ENCODE measurements at regions of chr11 and their contacts with region 1.

Region 1: GRCh38 chr11:79727221-79727620 is 286.4 kb upstream of the TENM4 start:
- DNase-seq: no peak
- ATAC-seq: no peak

Region 2: DNA sequence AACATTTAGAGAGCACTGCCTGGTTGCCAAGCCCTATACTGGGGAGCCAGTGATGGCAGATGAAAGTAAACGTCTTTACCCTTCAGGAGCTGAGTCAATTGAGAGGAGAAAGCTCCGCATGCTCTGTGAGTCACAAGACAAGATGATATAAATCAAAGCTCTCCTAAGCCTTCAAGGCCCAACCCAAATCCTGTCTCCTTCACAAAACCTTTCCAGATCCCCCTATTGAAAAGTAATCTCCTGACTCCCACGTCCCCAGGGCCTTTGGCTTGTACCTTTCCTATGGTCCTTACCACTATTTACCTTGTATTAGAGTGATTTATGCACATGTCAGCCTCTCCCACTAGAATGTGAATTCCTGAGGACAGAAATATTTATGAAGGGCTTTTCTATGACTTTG is 56.3 kb before region 1 on chr11:
- intact Hi-C with region 1: no loop called
- DNase-seq: no peak
- ATAC-seq: no peak

Region 3: DNA sequence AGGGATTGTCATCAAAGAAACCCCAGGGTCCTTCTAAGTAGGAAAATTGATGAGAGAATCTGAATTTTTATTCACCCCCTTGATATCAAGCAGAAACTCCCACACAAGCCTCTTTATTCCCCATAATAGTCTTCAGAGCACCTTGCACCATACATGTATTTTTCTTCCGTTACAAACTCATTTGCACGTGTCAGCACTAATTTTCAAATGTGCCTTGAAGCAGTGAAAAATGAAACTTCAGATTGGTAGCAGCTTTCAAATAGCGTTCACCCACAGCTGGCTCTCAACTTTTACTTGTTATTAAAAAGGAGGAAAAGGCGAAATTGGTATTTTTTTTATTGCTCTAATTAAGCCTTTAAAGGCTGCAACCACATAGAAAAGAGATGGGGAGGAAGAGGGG is 56.6 kb after region 1 on chr11:
- intact Hi-C with region 1: loop called (anchors 2 kb)
- DNase-seq: no peak
- ATAC-seq: no peak

Measured in left ventricle myocardium superior (tissue), 1 donor.